Right cardiac atrium (tissue), 5 donors: ENCODE measurements at regions of chr22 and their contacts with region 1.

Region 1: GRCh38 chr22:38872172-38872830 is at the start of gene CBX6:
- DNase-seq: peak; percentile 96 to 99 (median 99)
- ATAC-seq: peak; percentile 84 to 88
- H3K4me3 ChIP-seq: peak within 1 kb of the TSS; percentile 98
- H3K27ac ChIP-seq: peak within 1 kb of the TSS; percentile 95
- H3K4me1 ChIP-seq: peaks cover 2% of the 10 kb centered on the region
- H3K27me3 ChIP-seq: no peaks in the 10 kb centered on the region
- total RNA-seq, gene CBX6: 50.9 to 65.9 (median 56.6) TPM

Region 2: GRCh38 chr22:38766076-38766777 is 106.1 kb before region 1 on chr22:
- intact Hi-C with region 1: loop called in 1 of 4 experiments (anchors 10 kb)
- DNase-seq: peak in 2 of 3 donors; percentile 41 to 76
- ATAC-seq: peak; percentile 20 to 22
- H3K4me3 ChIP-seq: no peak overlapping the region
- H3K27ac ChIP-seq: no peak overlapping the region
- H3K4me1 ChIP-seq: no peaks in the 10 kb centered on the region
- H3K27me3 ChIP-seq: no peaks in the 10 kb centered on the region

Region 3: GRCh38 chr22:38793721-38794466 is 78.4 kb before region 1 on chr22 and contains the start of gene DNAL4:
- intact Hi-C with region 1: no loop called
- DNase-seq: peak; percentile 96 to 97 (median 96)
- ATAC-seq: peak; percentile 97
- H3K4me3 ChIP-seq: peak within 1 kb of the TSS; percentile 75
- H3K27ac ChIP-seq: peak within 1 kb of the TSS; percentile 50
- H3K4me1 ChIP-seq: peaks cover 3% of the 10 kb centered on the region
- H3K27me3 ChIP-seq: no peaks in the 10 kb centered on the region
- total RNA-seq, gene DNAL4: 10.7 to 13.7 (median 12.7) TPM

Region 4: GRCh38 chr22:38927033-38927781 is 54.9 kb after region 1 on chr22:
- intact Hi-C with region 1: loop called in 2 of 4 experiments (anchors 2 to 10 kb)
- DNase-seq: peak; percentile 70 to 91 (median 91)
- ATAC-seq: peak; percentile 82 to 84
- H3K4me3 ChIP-seq: peak overlapping the region; percentile 29
- H3K27ac ChIP-seq: peak overlapping the region; percentile 34
- H3K4me1 ChIP-seq: no peaks in the 10 kb centered on the region
- H3K27me3 ChIP-seq: no peaks in the 10 kb centered on the region

Region 5: GRCh38 chr22:39003165-39003638 is 130.9 kb after region 1 on chr22:
- intact Hi-C with region 1: loop called in 3 of 4 experiments (anchors 5 to 10 kb)
- DNase-seq: peak; percentile 77 to 88 (median 82)
- ATAC-seq: peak; percentile 91 to 93
- H3K4me3 ChIP-seq: no peak overlapping the region
- H3K27ac ChIP-seq: no peak overlapping the region
- H3K4me1 ChIP-seq: no peaks in the 10 kb centered on the region
- H3K27me3 ChIP-seq: no peaks in the 10 kb centered on the region

Region 6: DNA sequence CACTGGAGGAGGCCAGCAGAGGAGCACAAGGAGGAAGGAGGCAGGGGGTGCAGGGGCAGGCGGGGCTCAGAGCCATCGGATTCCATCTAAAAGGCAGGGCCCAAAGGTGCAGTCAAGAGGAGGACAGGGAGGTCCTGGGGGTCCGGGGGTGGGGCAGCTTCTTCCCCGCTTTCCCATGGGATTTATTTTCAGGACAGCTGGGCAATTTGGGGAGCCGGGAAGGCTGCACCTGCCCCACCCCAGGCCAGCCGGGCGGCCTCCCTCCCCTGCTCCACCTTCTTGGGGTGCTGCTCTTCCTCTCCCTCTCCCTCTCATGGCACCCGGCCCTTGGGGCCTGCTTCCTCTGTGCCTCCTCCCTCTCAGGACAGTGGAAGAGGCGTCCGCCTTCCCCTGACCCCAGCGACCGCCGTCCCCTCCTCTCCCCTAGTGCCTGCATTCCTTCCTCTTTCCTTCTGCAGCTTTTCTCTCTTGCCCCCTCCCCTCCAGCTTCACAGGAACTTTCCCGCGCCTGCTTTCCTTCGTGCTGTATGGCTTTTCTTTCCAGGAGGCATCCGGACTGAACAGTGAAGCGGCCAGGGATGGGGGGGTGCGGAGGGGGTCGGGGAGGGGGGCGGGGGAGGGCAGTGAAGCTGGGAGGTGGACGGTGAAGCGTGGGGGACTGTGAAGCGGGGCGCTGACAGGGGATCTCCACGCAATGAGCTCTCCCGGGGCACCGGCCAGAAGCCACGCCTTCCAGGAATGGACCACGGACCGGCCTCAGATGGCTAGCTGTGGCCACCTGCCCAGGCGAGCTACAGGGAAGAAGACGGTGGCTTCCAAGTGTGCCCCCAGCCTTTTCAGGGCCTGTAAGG is 251.7 kb after region 1 on chr22:
- intact Hi-C with region 1: loop called in 2 of 4 experiments (anchors 5 to 10 kb)
- DNase-seq: peak in 1 of 3 donors; percentile 49
- ATAC-seq: peak; percentile 33 to 36
- H3K4me3 ChIP-seq: no peak overlapping the region
- H3K27ac ChIP-seq: no peak overlapping the region
- H3K4me1 ChIP-seq: no peaks in the 10 kb centered on the region
- H3K27me3 ChIP-seq: no peaks in the 10 kb centered on the region

Region 7: DNA sequence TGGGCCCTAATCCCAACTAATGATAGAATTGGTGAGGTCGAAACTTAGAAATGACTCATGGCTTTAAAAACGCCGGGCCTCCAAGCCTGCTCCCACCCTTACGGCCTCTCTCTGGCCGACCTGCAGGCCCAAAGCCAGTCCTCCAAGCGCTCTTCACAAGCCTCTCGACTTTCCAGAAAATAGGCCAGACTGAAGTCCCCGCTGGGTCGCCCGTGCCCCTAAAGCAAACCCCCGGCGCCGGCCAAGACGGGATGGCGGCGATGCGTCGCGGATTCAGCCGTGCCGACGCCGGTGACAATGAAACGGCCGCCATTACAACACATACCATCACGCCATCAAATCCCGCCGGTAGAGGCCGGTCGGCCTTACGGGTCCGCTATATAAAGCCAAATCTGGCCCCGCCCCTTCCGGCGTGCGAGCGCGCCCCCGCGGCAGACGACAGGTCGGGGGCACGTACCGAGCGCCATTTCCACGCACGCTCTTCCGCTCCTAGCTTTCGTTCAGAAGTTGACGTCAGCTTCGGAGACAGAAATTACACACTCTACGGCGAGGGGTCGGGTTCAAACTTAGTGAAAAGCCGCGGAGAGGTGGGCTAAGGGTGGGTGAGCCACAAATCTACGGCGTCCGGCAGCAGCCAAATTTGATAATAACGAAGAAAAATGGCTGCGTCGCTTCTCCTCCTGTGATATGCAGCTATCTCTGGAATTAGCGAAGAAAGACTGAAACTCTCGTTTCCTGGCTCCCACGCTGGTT is 447.1 kb after region 1 on chr22 and contains the start of gene RPL3:
- intact Hi-C with region 1: loop called in 1 of 4 experiments (anchors 10 kb)
- DNase-seq: peak; percentile 96 to 99 (median 99)
- ATAC-seq: peak; percentile 91 to 92
- H3K4me3 ChIP-seq: peak within 1 kb of the TSS; percentile 79
- H3K27ac ChIP-seq: peak within 1 kb of the TSS; percentile 99
- H3K4me1 ChIP-seq: peaks cover 11% of the 10 kb centered on the region
- H3K27me3 ChIP-seq: no peaks in the 10 kb centered on the region
- total RNA-seq, gene RPL3: 948 to 1,416 (median 984) TPM